SK-N-SH (cell line): ENCODE measurements at regions of chr17 and their contacts with region 1.

Region 1: DNA sequence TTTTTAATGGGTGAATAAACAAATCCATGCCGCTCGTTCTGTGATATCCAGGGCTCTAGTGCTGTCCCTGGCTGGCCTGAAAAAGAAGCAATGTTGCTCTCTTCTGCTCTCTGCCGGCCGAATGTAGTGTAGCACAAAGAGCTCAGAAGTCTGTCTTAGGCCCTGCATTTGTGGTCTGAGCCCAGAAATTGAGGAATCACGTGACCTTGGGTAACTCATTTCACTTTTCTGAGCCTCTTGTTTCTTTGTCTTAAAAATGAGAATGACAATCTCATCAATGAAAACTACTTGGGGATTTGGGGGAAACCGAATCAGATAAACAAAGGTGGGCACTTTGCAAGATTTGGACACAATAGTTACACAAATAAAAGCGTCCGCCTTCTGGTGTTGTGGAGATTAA is 381.6 kb upstream of the ASIC2 start:
- DNase-seq: peak; percentile 62
- H3K4me3 ChIP-seq: no peak overlapping the region; a peak in 1 of 4 replicates
- H3K27ac ChIP-seq: no peak overlapping the region
- H3K4me1 ChIP-seq: no peaks in the 10 kb centered on the region
- H3K27me3 ChIP-seq: no peaks in the 10 kb centered on the region
- CTCF ChIP-seq: peak; percentile 80
- EP300 ChIP-seq: no peak
- RAD21 ChIP-seq: peak; percentile 72

Region 2: DNA sequence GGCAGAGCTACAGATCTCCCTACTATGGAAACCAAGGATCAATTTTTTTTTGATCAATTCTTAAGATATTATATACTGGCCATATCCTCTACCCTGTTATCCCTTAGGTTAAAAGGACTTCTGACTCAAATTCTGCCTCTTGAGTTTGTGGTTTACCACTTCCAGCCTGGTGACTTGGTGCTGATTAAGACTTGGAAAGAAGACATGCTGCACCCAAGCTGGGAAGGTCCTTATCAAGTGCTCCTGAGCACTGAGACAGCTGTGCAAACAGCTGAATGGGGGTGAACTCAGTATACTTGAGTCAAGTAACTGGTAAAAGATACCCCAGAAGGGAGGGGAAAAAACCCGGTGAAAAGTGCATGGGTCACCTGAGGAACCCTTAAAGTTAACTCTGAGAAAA is 703.5 kb before region 1 on chr17:
- CTCF ChIA-PET with region 1: no interaction called
- POLR2A ChIA-PET with region 1: no interaction called
- DNase-seq: no peak
- H3K4me3 ChIP-seq: no peak overlapping the region
- H3K27ac ChIP-seq: no peak overlapping the region
- H3K4me1 ChIP-seq: no peaks in the 10 kb centered on the region
- H3K27me3 ChIP-seq: no peaks in the 10 kb centered on the region
- CTCF ChIP-seq: no peak
- EP300 ChIP-seq: no peak
- RAD21 ChIP-seq: no peak

Region 3: DNA sequence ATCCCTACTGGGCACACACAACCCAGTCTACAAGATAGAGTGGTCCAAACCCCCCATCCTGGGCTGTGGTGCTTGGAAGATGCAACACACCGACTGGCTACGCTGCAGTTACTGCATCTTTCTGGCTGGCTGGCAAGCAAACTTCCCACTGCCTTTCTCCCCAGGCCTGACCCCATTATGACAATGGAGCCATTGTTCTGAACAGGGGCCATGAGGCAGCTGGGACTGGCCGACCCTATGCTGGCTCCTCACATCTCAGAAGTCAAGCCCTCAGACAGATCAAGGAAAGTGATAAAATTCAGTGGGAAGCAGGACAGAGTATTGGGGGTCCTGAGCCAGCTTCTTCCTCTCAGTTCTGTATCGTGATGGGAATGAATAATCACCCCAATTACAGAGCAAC is 17.5 kb before region 1 on chr17:
- CTCF ChIA-PET with region 1: interaction called, 10 read pairs
- POLR2A ChIA-PET with region 1: no interaction called
- DNase-seq: no peak
- H3K4me3 ChIP-seq: no peak overlapping the region
- H3K27ac ChIP-seq: no peak overlapping the region
- H3K4me1 ChIP-seq: no peaks in the 10 kb centered on the region
- H3K27me3 ChIP-seq: no peaks in the 10 kb centered on the region
- CTCF ChIP-seq: no peak
- EP300 ChIP-seq: no peak
- RAD21 ChIP-seq: no peak

Region 4: DNA sequence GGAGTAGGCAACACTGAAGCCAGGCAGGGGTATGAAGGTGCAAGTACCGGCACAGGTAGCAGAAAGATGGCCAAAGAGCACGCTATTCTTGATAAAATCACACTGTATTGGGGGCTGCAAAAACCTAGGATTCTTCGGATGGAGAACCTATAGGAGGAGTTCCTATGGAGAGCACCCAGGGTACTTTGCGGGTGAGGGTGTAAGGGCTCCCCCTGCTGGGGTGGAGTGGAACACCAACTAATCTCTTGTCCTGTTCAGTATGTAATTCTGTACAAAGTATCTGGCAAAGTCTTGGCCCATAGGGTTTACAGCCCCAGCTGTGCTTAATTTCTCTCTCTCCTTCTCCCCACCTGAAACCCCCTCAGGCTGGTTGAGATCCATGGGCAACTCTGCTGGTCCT is 11.5 kb after region 1 on chr17:
- CTCF ChIA-PET with region 1: interaction called, 49 read pairs
- POLR2A ChIA-PET with region 1: no interaction called
- DNase-seq: peak; percentile 32
- H3K4me3 ChIP-seq: no peak overlapping the region
- H3K27ac ChIP-seq: no peak overlapping the region
- H3K4me1 ChIP-seq: no peaks in the 10 kb centered on the region; a peak in 2 of 4 replicates
- H3K27me3 ChIP-seq: no peaks in the 10 kb centered on the region
- CTCF ChIP-seq: peak; percentile 55
- EP300 ChIP-seq: no peak
- RAD21 ChIP-seq: no peak